Astrocyte of the cerebellum (primary cell): ENCODE measurements at regions of chr22 and their contacts with region 1.

Region 1: DNA sequence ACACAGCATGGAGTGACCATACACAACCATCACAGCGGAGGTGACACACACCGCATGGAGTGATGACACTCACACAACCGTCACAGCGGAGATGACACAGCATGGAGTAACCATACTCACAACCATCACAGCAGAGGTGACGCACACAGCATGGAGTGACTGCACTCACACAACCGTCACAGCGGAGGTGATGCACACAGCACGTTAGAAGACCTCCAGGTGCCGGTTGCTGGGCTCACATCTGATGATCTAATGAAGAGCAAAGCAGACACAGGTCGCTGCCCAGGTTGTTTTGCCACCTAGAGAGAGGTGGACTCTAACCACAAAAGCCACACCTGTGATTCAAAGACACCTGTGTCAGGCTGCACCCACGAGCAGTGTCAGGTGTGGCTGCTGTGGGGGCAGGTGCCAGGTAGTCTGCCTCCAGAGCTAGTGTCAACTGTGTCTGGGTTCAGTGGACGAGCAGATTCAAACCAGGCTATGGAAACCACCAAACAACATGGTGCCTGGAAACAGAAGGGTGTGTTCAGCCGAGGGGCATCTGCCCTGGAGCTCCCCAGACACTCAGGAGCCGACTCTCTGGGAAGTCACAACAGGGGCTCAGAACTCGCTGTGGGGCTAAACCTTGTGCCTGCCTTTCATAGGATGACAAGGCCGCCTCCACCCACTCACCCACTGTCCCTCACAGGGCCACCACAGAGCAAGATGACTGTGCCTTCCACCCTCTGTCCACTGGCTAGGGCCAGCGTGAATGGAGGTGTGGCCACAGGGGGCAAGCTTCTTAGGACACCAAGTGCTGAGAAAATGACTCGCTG is 608.2 kb downstream of the TBC1D22A start:
- DNase-seq: no peak
- H3K4me3 ChIP-seq: no peak overlapping the region
- CTCF ChIP-seq: no peak

Region 2: GRCh38 chr22:47328550-47329243 is 42.0 kb before region 1 on chr22:
- in situ Hi-C with region 1: no loop called
- DNase-seq: peak; percentile 84
- H3K4me3 ChIP-seq: no peak overlapping the region
- CTCF ChIP-seq: no peak

Region 3: GRCh38 chr22:47419239-47419638 is 48.6 kb after region 1 on chr22:
- in situ Hi-C with region 1: loop called (anchors 5 kb)
- DNase-seq: no peak
- H3K4me3 ChIP-seq: no peak overlapping the region
- CTCF ChIP-seq: no peak